Head of caudate nucleus (tissue), 42 donors: ENCODE measurements at regions of chr6 and their contacts with region 1.

Region 1: DNA sequence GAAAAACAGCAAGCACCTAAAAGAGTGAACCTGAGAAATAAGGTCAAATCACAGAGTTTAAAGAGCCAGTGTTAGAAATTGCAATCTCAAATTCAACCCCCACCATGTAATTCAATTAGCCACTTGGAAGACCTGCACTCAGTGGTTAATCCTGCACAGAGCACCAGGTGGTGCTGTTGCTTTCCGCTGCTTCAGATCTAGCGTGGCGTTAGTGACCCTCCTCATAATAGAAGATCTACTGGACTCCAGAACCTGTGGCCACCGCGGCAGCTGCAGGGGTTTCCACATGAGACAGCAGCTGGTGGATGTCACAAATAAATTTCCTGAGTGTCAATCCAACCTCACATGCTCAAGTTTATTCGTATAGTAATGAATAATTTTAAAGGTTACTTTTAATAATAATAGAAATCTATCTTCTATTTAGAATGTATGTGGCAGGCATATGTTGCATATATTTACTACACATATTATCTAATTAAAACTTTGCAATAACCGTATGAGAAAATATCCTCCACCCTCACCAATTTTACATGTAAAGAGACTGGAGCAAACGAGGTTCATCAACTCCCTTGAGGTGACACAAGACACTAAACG is 84.4 kb downstream of the SYNE1 start:
- DNase-seq: peak in 40 of 42 donors; percentile 7 to 72 (median 47)

Region 2: DNA sequence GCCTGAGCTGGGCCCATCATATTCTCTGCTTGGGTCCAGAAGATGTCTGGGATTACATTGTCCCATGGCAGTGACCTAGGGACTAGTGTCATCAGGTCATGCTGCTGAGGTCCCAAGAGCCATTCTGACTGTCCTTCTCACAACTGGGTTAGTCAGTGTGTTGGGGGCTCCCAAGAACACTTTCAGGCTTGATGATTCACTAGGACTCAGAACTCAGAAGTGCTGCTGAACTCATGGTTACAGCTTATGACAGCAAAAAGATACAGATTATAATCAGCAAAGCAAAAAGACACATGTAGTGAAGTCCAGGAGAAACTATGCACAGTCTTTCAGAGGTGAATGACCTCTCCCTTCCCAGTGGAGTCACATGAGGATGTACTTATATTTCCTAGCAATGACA is 23.3 kb before region 1 on chr6:
- intact Hi-C with region 1: no loop called
- DNase-seq: no peak

Region 3: GRCh38 chr6:152642989-152643388 is 90.3 kb after region 1 on chr6:
- intact Hi-C with region 1: loop called (anchors 10 kb)
- DNase-seq: peak; percentile 39 to 88 (median 72)

Region 4: DNA sequence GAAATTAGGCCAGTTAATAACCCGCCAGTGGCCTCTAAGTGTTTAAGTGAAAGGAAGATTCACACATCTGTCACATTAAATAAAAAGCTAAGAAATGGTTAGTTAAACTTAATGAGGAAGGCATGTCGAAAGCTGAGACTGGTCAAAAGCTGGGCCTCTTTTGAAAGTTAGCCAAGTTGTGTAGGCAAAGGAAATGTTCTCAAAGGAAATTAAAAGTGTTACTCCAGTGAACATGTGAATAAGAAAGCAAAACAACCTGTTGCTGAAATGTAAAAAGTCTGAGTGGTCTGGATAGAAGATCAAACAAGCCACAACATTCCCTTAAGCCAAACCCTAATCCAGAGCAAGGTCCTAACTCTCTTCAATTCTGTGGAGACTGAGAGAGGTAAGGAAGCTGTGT is 460.7 kb after region 1 on chr6:
- intact Hi-C with region 1: no loop called
- DNase-seq: no peak